HCT116 (cell line): ENCODE measurements at regions of chr7 and their contacts with region 1.

Region 1: DNA sequence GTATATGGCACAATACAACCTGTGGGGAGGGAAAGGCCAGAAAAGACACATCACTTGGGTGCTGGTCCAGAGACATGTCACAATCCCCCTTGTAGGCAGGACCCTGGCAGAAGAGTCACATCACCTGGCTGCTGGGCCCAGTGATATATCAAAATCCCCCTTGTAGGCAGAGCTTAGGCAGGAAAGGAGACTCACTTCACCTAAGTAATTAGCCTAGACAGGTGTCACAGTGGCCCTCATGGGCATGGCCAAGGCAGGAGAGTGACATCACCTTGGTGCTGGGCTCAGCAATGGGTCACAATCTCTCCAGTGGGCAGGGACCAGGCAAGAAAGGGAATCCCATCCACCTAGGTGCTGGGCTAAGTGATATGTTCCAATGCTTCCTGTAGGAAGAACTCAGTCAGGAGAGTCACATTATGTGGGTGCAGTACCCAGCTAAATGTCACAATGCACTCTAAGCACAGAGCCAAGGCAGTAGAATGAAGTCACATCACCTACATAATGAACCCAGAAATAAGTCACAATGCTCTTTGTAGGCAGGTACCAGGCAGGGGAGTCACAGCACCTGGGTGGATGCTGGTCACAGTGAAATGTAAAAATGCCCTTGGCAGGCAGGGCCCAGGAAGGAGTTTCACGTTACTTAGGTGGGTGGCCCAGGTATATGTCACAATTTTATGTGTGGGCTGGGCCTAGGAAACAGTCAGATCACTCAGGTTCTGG is 18.9 kb upstream of the ZNF736 start:
- DNase-seq: no peak
- ATAC-seq: no peak
- H3K4me3 ChIP-seq: no peak overlapping the region
- H3K27ac ChIP-seq: no peak overlapping the region
- H3K4me1 ChIP-seq: no peaks in the 10 kb centered on the region
- H3K27me3 ChIP-seq: no peaks in the 10 kb centered on the region
- CTCF ChIP-seq: no peak
- POLR2A ChIP-seq: no peak
- RAD21 ChIP-seq: no peak

Region 2: GRCh38 chr7:64241162-64241561 is 53.7 kb before region 1 on chr7:
- CTCF ChIA-PET with region 1: no interaction called
- POLR2A ChIA-PET with region 1: no interaction called
- RAD21 ChIA-PET with region 1: no interaction called
- intact Hi-C with region 1: loop called (anchors 10 kb)
- DNase-seq: no peak
- ATAC-seq: no peak
- H3K4me3 ChIP-seq: no peak overlapping the region
- H3K27ac ChIP-seq: no peak overlapping the region
- H3K4me1 ChIP-seq: no peaks in the 10 kb centered on the region
- H3K27me3 ChIP-seq: no peaks in the 10 kb centered on the region
- CTCF ChIP-seq: no peak
- POLR2A ChIP-seq: no peak
- RAD21 ChIP-seq: no peak

Region 3: GRCh38 chr7:64611406-64612116 is 316.7 kb after region 1 on chr7:
- CTCF ChIA-PET with region 1: no interaction called
- POLR2A ChIA-PET with region 1: no interaction called
- RAD21 ChIA-PET with region 1: no interaction called
- intact Hi-C with region 1: no loop called
- DNase-seq: no peak
- ATAC-seq: no peak
- H3K4me3 ChIP-seq: no peak overlapping the region
- H3K27ac ChIP-seq: no peak overlapping the region
- H3K4me1 ChIP-seq: no peaks in the 10 kb centered on the region
- H3K27me3 ChIP-seq: no peaks in the 10 kb centered on the region
- CTCF ChIP-seq: no peak
- POLR2A ChIP-seq: no peak
- RAD21 ChIP-seq: no peak